Natural killer cell (primary cell): ENCODE measurements at regions of chr14 and their contacts with region 1.

Region 1: GRCh38 chr14:75176142-75176820 is at the start of gene TMED10:
- DNase-seq: peak; percentile 90 to 95
- ATAC-seq: peak; percentile 72 to 89 (median 78)
- H3K4me3 ChIP-seq: peak within 1 kb of the TSS; percentile 73
- H3K4me3 Mint-ChIP-seq: peak within 1 kb of the TSS; percentile 93
- H3K27ac ChIP-seq: peak within 1 kb of the TSS; percentile 94
- H3K27ac Mint-ChIP-seq: peak within 1 kb of the TSS; percentile 99 to 100
- H3K4me1 ChIP-seq: peaks cover 16% of the 10 kb centered on the region
- H3K4me1 Mint-ChIP-seq: peaks cover 43 to 46% of the 10 kb centered on the region in 2 donors
- H3K27me3 ChIP-seq: no peaks in the 10 kb centered on the region
- H3K27me3 Mint-ChIP-seq: no peaks in the 10 kb centered on the region
- CTCF ChIP-seq: no peak
- total RNA-seq, gene TMED10: 216 to 244 (median 231) TPM

Region 2: DNA sequence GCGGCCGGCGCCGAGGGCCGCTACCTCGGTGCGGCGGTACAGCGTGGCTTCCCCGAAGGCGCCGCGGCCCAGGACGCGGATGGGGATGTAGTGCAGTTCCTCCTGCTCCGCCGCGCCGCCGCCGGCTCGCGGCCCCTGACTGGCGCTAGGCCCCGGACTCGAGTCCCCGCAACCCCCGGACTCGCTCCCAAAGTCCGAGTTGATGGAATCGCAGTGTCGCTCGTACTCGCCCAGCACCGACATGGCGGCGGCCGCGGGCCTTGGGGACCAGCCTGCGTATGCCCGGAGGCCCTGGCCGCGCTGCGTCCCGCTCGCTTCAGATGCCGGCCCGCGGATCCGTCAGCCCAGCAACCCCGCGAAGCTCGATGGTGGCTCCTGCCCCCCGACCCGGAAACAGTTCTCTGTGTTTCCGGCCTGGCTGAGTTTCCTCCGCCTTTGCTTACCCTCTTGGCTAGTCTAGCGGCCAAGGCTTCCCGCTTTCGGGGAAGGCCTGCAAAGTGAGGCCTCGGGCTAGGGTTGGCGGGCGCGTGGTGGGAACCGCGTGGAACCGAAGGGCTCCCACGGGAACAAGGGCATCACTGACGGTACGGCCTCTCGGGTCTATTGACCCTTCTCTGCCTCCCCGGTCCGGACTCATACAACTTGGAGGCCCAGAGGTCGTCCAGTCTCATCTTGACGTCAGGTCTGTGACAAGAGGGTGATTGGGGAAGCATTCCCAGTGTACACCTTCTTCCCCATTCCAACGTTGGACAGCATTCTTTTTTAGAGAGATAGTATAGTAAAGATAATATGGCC is 49.4 kb before region 1 on chr14 and contains the start of gene NEK9:
- intact Hi-C with region 1: loop called (anchors 2 kb)
- DNase-seq: peak; percentile 88 to 93
- ATAC-seq: peak; percentile 91 to 95 (median 92)
- H3K4me3 ChIP-seq: peak within 1 kb of the TSS; percentile 79
- H3K4me3 Mint-ChIP-seq: peak within 1 kb of the TSS; percentile 89
- H3K27ac ChIP-seq: peak within 1 kb of the TSS; percentile 96
- H3K27ac Mint-ChIP-seq: peak within 1 kb of the TSS; percentile 89 to 98
- H3K4me1 ChIP-seq: peaks cover 12% of the 10 kb centered on the region
- H3K4me1 Mint-ChIP-seq: peaks cover 40 to 42% of the 10 kb centered on the region in 2 donors
- H3K27me3 ChIP-seq: no peaks in the 10 kb centered on the region
- H3K27me3 Mint-ChIP-seq: no peaks in the 10 kb centered on the region
- CTCF ChIP-seq: no peak
- total RNA-seq, gene NEK9: 64.4 to 78.7 (median 74.4) TPM

Region 3: GRCh38 chr14:75147423-75148071 is 28.7 kb before region 1 on chr14:
- intact Hi-C with region 1: loop called (anchors 1 kb)
- DNase-seq: peak; percentile 50 to 61
- ATAC-seq: peak; percentile 96 to 100 (median 99)
- H3K4me3 ChIP-seq: no peak overlapping the region
- H3K4me3 Mint-ChIP-seq: peak overlapping the region; percentile 70
- H3K27ac ChIP-seq: peak overlapping the region; percentile 54
- H3K27ac Mint-ChIP-seq: peak overlapping the region; percentile 87 to 90
- H3K4me1 ChIP-seq: peaks cover 25% of the 10 kb centered on the region
- H3K4me1 Mint-ChIP-seq: peaks cover 52 to 53% of the 10 kb centered on the region in 2 donors
- H3K27me3 ChIP-seq: no peaks in the 10 kb centered on the region
- H3K27me3 Mint-ChIP-seq: no peaks in the 10 kb centered on the region
- CTCF ChIP-seq: peak; percentile 50

Region 4: DNA sequence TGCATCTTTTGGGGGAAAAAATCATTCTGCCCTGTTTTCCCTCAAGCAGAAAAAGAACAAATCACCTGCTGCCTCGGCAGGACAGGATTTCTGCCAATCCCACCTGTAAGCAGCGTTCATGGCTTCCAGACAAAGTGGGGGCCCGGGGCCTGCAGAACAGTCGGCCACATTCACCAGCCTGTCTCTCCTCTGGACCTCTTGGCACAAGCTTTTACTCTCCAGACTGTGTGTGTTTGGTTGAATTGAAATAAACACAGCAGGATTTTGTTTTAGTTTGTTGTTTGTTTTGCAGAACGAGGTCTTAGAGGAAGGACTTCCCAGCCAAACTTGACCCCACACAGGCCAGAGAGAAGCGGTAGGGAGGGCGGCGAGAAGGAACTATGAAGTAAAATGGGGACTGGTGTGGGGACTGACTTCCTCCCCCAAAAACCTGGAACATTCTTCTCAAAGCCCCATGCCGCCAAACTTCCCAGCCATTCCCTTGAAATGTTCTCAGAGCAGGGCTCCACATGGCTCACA is 60.7 kb after region 1 on chr14:
- intact Hi-C with region 1: no loop called
- DNase-seq: no peak
- ATAC-seq: no peak
- H3K4me3 ChIP-seq: no peak overlapping the region
- H3K4me3 Mint-ChIP-seq: no peak overlapping the region
- H3K27ac ChIP-seq: no peak overlapping the region
- H3K27ac Mint-ChIP-seq: no peak overlapping the region
- H3K4me1 ChIP-seq: peaks cover 21% of the 10 kb centered on the region
- H3K4me1 Mint-ChIP-seq: peaks cover 10 to 34% of the 10 kb centered on the region in 2 donors
- H3K27me3 ChIP-seq: no peaks in the 10 kb centered on the region
- H3K27me3 Mint-ChIP-seq: no peaks in the 10 kb centered on the region
- CTCF ChIP-seq: no peak

Region 5: DNA sequence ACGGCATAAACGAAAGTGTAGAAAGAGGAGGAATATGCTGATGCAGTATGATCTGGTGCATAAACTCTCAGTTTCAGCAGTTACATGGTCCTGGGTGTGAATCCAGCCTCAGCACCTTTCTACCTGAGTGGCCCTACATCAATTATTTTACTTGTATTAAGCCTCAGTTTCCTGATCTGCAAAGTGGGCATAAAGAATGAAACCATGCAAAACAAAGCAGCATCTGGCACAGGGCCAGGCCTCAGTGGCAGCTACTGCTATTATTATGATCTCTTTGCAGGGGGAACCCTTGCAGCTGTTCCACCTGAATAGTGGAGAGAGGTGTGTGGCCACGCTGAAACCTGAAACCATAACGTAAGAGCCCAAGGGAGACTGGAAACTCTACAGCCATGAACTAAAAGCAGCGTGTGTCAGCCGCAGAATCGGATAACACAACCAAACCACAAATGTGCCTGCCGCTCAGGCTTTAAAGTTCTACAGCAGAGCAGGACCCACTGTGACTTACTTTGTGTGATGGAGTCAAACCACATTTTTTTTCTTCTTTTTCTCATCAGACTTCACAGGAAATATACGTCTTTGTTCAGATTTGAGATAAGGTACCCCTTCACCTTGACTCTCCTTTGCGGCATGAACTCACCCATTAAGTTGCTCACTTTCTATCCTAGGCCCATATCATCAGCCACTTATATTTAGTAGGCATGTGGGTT is 73.1 kb after region 1 on chr14:
- intact Hi-C with region 1: loop called (anchors 1 kb)
- DNase-seq: peak; percentile 76 to 95
- ATAC-seq: peak; percentile 68 to 84 (median 80)
- H3K4me3 ChIP-seq: no peak overlapping the region
- H3K4me3 Mint-ChIP-seq: peak overlapping the region; percentile 84
- H3K27ac ChIP-seq: peak overlapping the region; percentile 88
- H3K27ac Mint-ChIP-seq: peak overlapping the region; percentile 90 to 93
- H3K4me1 ChIP-seq: peaks cover 61% of the 10 kb centered on the region
- H3K4me1 Mint-ChIP-seq: peaks cover 58% of the 10 kb centered on the region in 2 donors
- H3K27me3 ChIP-seq: no peaks in the 10 kb centered on the region
- H3K27me3 Mint-ChIP-seq: no peaks in the 10 kb centered on the region
- CTCF ChIP-seq: no peak

Region 6: DNA sequence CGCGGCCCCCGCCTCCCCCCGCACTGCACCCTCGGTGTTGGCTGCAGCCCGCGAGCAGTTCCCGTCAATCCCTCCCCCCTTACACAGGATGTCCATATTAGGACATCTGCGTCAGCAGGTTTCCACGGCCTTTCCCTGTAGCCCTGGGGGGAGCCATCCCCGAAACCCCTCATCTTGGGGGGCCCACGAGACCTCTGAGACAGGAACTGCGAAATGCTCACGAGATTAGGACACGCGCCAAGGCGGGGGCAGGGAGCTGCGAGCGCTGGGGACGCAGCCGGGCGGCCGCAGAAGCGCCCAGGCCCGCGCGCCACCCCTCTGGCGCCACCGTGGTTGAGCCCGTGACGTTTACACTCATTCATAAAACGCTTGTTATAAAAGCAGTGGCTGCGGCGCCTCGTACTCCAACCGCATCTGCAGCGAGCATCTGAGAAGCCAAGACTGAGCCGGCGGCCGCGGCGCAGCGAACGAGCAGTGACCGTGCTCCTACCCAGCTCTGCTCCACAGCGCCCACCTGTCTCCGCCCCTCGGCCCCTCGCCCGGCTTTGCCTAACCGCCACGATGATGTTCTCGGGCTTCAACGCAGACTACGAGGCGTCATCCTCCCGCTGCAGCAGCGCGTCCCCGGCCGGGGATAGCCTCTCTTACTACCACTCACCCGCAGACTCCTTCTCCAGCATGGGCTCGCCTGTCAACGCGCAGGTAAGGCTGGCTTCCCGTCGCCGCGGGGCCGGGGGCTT is 102.3 kb after region 1 on chr14 and contains the start of gene FOS:
- intact Hi-C with region 1: loop called (anchors 1 kb)
- DNase-seq: peak; percentile 94 to 97
- ATAC-seq: peak; percentile 62 to 84 (median 71)
- H3K4me3 ChIP-seq: peak within 1 kb of the TSS; percentile 97
- H3K4me3 Mint-ChIP-seq: peak within 1 kb of the TSS; percentile 93
- H3K27ac ChIP-seq: peak within 1 kb of the TSS; percentile 84
- H3K27ac Mint-ChIP-seq: peak within 1 kb of the TSS; percentile 93 to 95
- H3K4me1 ChIP-seq: peaks cover 65% of the 10 kb centered on the region
- H3K4me1 Mint-ChIP-seq: peaks cover 63 to 79% of the 10 kb centered on the region in 2 donors
- H3K27me3 ChIP-seq: peaks cover 21% of the 10 kb centered on the region
- H3K27me3 Mint-ChIP-seq: peaks cover 20 to 26% of the 10 kb centered on the region in 2 donors
- CTCF ChIP-seq: no peak
- total RNA-seq, gene FOS: 2,527 to 3,257 (median 3,104) TPM

Region 7: DNA sequence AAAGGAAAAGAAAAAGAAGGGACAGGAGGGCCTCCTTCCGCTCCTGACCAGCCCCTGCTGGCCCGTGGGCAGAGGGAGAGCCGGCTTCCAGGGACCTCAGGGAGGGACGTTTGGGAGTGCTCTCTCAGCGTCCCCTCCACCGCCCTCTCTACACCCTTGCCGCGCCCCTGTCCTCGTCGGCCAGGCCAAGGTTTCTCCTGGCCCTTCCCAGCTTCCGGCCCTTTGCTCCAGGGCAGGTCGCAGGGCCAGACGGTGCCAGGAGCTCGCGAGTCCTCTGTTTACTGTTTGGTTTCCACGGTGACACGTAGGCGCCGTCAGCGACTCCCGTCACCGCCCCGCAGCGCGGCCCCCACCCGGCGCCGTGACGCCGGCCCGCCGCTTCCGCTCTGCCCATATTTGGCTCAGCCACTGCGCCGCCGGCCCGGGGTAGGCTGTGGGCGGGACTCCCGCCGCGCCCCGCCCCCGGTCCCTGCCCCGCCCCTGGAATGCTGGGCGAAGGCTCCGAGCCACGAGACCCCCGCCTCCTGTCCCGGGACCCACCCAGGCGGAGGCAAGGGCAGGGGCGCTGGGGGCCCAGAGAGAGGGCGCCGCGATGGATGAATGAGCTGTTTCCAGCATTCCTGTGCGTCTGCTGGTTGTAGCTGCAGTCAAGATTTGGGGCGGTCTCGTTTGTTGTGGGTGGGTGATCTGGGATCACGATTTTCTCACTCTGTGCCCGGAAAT is 117.8 kb after region 1 on chr14:
- intact Hi-C with region 1: loop called (anchors 1 kb)
- DNase-seq: peak; percentile 95 to 99
- ATAC-seq: peak; percentile 79 to 95 (median 86)
- H3K4me3 ChIP-seq: peak overlapping the region; percentile 66
- H3K4me3 Mint-ChIP-seq: peak overlapping the region; percentile 98
- H3K27ac ChIP-seq: peak overlapping the region; percentile 94
- H3K27ac Mint-ChIP-seq: peak overlapping the region; percentile 89 to 96
- H3K4me1 ChIP-seq: peaks cover 33% of the 10 kb centered on the region
- H3K4me1 Mint-ChIP-seq: peaks cover 11 to 19% of the 10 kb centered on the region in 2 donors
- H3K27me3 ChIP-seq: no peaks in the 10 kb centered on the region
- H3K27me3 Mint-ChIP-seq: peaks cover 8 to 9% of the 10 kb centered on the region in 2 donors
- CTCF ChIP-seq: no peak